CD4-positive, alpha-beta memory T cell (primary cell): ENCODE measurements at regions of chr17 and their contacts with region 1.

Region 1: GRCh38 chr17:43907425-43907981 is at the start of gene MPP2:
- DNase-seq: peak; percentile 60 to 76 (median 67)
- H3K4me3 ChIP-seq: peak within 1 kb of the TSS; percentile 42 to 65
- H3K4me3 Mint-ChIP-seq: peak within 1 kb of the TSS; percentile 82 to 96 (median 85)
- H3K27ac ChIP-seq: peak within 1 kb of the TSS; percentile 58
- H3K27ac Mint-ChIP-seq: peak within 1 kb of the TSS; percentile 46 to 91 (median 86)
- H3K4me1 ChIP-seq: peaks cover 25% of the 10 kb centered on the region
- H3K4me1 Mint-ChIP-seq: peaks cover 7 to 35% (median 14%) of the 10 kb centered on the region in 4 donors
- H3K27me3 ChIP-seq: peaks cover 12% of the 10 kb centered on the region
- H3K27me3 Mint-ChIP-seq: peaks cover 6 to 16% of the 10 kb centered on the region in 2 donors
- total RNA-seq, gene MPP2: 2.1 to 3.0 TPM

Region 2: DNA sequence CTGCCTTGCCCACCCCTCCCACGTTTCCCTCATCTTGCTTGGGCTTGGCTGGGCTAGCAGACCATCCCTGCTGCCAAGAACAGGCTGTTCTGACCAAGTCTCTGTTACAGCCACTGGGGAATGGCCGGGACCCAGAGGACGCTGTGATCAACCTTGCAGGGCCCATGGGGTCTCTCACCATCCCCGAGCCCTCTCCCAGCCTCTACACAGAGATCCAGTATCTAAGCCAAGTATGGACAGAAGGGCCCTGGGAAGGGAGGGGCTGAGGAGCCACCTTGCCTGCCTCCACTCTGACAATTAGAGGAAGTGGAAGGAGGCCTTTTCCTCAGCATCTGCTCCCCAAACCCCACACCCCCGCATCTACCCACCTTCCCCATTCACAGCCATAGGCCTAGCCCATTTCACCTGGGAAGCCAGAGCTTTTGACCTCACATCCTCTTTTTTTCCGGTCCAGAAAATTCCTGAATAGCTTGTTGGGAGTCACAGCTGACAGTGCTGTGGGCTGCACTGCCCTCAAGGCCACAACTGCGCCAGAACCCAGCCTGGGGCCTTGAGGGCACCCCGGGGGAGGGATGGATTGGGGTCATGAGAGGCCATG is 46.4 kb before region 1 on chr17:
- CTCF ChIA-PET with region 1: no interaction called
- POLR2A ChIA-PET with region 1: no interaction called
- intact Hi-C with region 1: no loop called
- DNase-seq: no peak
- H3K4me3 ChIP-seq: no peak overlapping the region
- H3K4me3 Mint-ChIP-seq: no peak overlapping the region
- H3K27ac ChIP-seq: no peak overlapping the region
- H3K27ac Mint-ChIP-seq: no peak overlapping the region
- H3K4me1 ChIP-seq: no peaks in the 10 kb centered on the region
- H3K4me1 Mint-ChIP-seq: no peaks in the 10 kb centered on the region
- H3K27me3 ChIP-seq: peaks cover 6% of the 10 kb centered on the region
- H3K27me3 Mint-ChIP-seq: peaks cover 8 to 11% of the 10 kb centered on the region in 2 donors

Region 3: DNA sequence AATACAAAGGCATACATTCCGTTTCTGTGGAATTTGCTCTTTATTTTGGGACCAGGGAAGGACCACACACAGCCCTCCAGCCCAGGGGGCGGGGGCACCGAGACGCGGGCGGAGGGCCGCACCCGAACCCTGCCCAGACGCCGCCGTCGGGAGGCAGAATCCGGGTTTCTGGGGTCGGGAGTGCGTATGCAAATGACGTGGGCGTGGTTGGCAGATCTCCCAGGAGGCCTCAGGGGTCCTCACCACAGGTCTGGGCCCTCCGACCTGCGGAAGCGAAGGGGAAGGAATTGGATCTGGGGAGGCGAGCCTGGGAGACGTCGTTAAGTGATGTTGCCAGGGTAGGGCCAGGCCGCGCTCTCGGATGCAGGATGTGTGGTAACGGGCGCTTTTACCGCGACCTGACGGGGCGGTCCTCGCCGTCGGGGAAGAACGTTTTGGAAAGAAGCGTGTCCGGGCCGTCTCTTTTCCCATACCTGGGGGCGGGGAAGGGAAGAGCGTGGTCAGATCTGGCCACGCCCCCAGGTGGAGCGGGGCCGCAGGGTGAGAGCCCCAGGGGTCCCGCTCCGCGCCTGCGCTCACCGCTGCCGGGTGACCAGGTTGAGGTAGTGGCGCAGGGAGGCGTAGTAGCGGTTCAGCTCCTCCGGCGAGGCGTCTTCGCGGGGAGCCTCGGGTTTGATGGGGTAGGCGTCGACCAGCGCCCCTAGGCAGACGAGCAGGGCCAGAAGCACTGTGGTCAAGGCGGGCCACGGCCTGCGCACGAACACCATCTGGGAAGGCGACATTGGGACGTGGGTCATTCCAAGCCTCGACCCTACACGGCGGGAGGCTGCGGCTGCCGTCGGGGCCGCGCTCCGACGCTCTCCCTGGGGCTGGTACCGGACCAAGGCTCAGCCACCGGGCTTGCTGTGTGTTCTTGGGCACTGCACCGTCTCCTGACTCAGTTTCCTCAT is 45.5 kb after region 1 on chr17:
- CTCF ChIA-PET with region 1: no interaction called
- POLR2A ChIA-PET with region 1: no interaction called
- intact Hi-C with region 1: no loop called
- DNase-seq: peak in 1 of 5 donors; percentile 8
- H3K4me3 ChIP-seq: no peak overlapping the region
- H3K4me3 Mint-ChIP-seq: peak overlapping the region in 3 of 8 donors; percentile 17 to 48 (median 46)
- H3K27ac ChIP-seq: no peak overlapping the region
- H3K27ac Mint-ChIP-seq: no peak overlapping the region
- H3K4me1 ChIP-seq: peaks cover 9% of the 10 kb centered on the region
- H3K4me1 Mint-ChIP-seq: peaks cover 0 to 8% (median 3%) of the 10 kb centered on the region in 4 donors
- H3K27me3 ChIP-seq: peaks cover 6% of the 10 kb centered on the region
- H3K27me3 Mint-ChIP-seq: peaks cover 27 to 38% of the 10 kb centered on the region in 2 donors

Region 4: DNA sequence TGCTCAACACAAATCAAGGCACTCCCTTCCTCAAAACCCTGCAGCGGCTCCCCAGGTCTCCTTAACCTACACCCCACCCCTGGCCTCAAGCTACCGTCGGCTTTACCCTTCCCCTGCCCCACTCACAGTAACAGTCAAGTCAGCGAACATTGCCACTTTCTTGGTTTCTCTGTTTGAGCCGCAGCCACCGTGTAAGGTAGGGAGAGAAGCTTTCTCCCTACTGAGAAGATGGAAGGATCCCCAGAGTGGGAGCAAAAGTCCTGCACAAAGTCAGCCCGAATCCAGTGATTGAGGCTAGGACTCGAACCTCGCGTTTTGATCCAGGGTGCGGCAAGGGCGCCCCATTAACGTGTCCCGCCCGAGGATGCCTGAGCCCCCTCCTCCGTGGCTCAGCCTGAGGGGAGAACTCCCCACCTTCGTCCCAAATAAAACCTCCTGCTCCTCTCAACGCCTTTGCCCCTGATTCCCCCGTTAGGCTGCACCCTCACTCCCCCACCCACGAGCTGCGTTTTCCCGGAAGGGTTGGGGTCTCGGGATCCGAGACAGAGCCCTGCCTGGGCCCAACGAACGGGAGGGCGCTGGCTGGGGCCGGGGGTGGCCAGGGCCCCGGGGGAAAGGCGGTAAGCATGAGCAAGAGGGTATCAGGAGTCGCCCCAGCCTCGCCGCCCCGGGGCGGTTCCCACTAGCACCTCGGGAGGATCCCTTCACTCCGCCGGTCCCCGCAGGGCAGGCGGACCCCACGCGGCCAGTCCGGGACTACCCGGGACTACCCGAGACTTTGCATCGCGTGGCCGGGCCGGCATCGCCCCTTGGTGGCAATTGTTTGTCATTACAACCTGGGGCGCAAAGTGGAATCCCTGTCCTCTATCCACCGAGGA is 87.0 kb after region 1 on chr17:
- CTCF ChIA-PET with region 1: interaction called, 6 read pairs
- POLR2A ChIA-PET with region 1: no interaction called
- intact Hi-C with region 1: loop called (anchors 1 kb)
- DNase-seq: peak; percentile 61 to 69 (median 65)
- H3K4me3 ChIP-seq: no peak overlapping the region
- H3K4me3 Mint-ChIP-seq: peak overlapping the region in 2 of 8 donors; percentile 4 to 51
- H3K27ac ChIP-seq: no peak overlapping the region
- H3K27ac Mint-ChIP-seq: peak overlapping the region in 1 of 7 donors; percentile 13
- H3K4me1 ChIP-seq: peaks cover 10% of the 10 kb centered on the region
- H3K4me1 Mint-ChIP-seq: peaks cover 0 to 3% (median under 1%) of the 10 kb centered on the region in 4 donors
- H3K27me3 ChIP-seq: peaks cover 3% of the 10 kb centered on the region
- H3K27me3 Mint-ChIP-seq: peaks cover 8 to 9% of the 10 kb centered on the region in 2 donors